ENCODE measurements at regions of chr1 and their contacts with region 1.

Region 1: DNA sequence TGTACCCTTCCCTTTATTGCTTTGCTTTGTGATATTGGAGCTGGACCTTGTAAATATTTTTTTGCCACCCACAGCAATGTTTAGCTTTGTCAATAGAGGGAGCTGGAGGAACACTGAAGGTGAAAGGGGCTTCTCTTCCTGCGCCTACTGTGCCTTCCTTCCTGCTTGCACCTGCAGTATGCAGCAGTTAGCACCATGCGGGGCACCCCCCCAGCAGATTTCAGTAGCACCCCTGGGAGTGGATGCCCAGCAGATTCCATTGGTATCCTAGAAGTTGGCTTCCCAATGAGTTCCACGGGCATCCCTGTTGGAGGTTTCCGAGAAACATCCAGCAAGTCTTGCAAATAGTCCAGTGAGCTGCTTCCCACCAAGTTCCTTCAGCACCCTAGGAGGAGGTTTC is 25.6 kb downstream of the S100A10 start:
- DNase-seq: peak; percentile 52 to 74
- ATAC-seq: peak; percentile 79 to 84
- H3K4me3 ChIP-seq: no peak overlapping the region
- H3K27ac ChIP-seq: peak overlapping the region; percentile 77 to 89
- H3K4me1 ChIP-seq: peaks cover 49% of the 10 kb centered on the region
- CTCF ChIP-seq: peak; percentile 92
- EP300 ChIP-seq: no peak
- POLR2A ChIP-seq: no peak
- RAD21 ChIP-seq: peak; percentile 97 to 99

Region 2: GRCh38 chr1:151915061-151915686 is 52.9 kb before region 1 on chr1:
- CTCF ChIA-PET with region 1: interaction called, 12 read pairs
- POLR2A ChIA-PET with region 1: no interaction called
- DNase-seq: no peak
- ATAC-seq: no peak
- H3K4me3 ChIP-seq: no peak overlapping the region
- H3K27ac ChIP-seq: no peak overlapping the region
- H3K4me1 ChIP-seq: no peaks in the 10 kb centered on the region
- CTCF ChIP-seq: no peak
- EP300 ChIP-seq: no peak
- POLR2A ChIP-seq: no peak
- RAD21 ChIP-seq: no peak

Region 3: GRCh38 chr1:151939779-151940178 is 28.3 kb before region 1 on chr1:
- CTCF ChIA-PET with region 1: interaction called, 70 read pairs
- POLR2A ChIA-PET with region 1: no interaction called
- DNase-seq: no peak
- ATAC-seq: no peak
- H3K4me3 ChIP-seq: no peak overlapping the region
- H3K27ac ChIP-seq: peak overlapping the region in 1 of 2 experiments; percentile 37; a peak in 2 of 6 replicates
- H3K4me1 ChIP-seq: peaks cover 75% of the 10 kb centered on the region
- CTCF ChIP-seq: no peak
- EP300 ChIP-seq: no peak
- POLR2A ChIP-seq: no peak
- RAD21 ChIP-seq: no peak

Region 4: GRCh38 chr1:151953409-151954094 is 14.5 kb before region 1 on chr1:
- CTCF ChIA-PET with region 1: interaction called, 35 read pairs
- POLR2A ChIA-PET with region 1: no interaction called
- DNase-seq: no peak
- ATAC-seq: peak in 1 of 2 experiments; percentile 73; a peak in 3 of 6 replicates
- H3K4me3 ChIP-seq: no peak overlapping the region
- H3K27ac ChIP-seq: peak overlapping the region; percentile 38 to 45; a peak in 4 of 6 replicates
- H3K4me1 ChIP-seq: peaks cover 18% of the 10 kb centered on the region
- CTCF ChIP-seq: no peak
- EP300 ChIP-seq: no peak
- POLR2A ChIP-seq: no peak
- RAD21 ChIP-seq: no peak

Region 5: GRCh38 chr1:152001391-152002249 is 33.6 kb after region 1 on chr1:
- CTCF ChIA-PET with region 1: interaction called, 1,410 read pairs
- POLR2A ChIA-PET with region 1: interaction called, 19 read pairs
- DNase-seq: peak; percentile 66 to 89
- ATAC-seq: peak; percentile 66 to 70
- H3K4me3 ChIP-seq: no peak overlapping the region
- H3K27ac ChIP-seq: peak overlapping the region; percentile 72 to 83
- H3K4me1 ChIP-seq: peaks cover 52% of the 10 kb centered on the region
- CTCF ChIP-seq: peak; percentile 95
- EP300 ChIP-seq: no peak
- POLR2A ChIP-seq: no peak
- RAD21 ChIP-seq: peak; percentile 99

Region 6: GRCh38 chr1:152034646-152035405 is 66.8 kb after region 1 on chr1:
- CTCF ChIA-PET with region 1: interaction called, 25 read pairs
- POLR2A ChIA-PET with region 1: interaction called, 3 read pairs
- DNase-seq: peak; percentile 80 to 86
- ATAC-seq: peak; percentile 44 to 59
- H3K4me3 ChIP-seq: peak overlapping the region; percentile 78
- H3K27ac ChIP-seq: peak overlapping the region; percentile 98 to 100
- H3K4me1 ChIP-seq: peaks cover 31% of the 10 kb centered on the region
- CTCF ChIP-seq: peak; percentile 73
- EP300 ChIP-seq: no peak
- POLR2A ChIP-seq: no peak
- RAD21 ChIP-seq: peak; percentile 44 to 54

Region 7: DNA sequence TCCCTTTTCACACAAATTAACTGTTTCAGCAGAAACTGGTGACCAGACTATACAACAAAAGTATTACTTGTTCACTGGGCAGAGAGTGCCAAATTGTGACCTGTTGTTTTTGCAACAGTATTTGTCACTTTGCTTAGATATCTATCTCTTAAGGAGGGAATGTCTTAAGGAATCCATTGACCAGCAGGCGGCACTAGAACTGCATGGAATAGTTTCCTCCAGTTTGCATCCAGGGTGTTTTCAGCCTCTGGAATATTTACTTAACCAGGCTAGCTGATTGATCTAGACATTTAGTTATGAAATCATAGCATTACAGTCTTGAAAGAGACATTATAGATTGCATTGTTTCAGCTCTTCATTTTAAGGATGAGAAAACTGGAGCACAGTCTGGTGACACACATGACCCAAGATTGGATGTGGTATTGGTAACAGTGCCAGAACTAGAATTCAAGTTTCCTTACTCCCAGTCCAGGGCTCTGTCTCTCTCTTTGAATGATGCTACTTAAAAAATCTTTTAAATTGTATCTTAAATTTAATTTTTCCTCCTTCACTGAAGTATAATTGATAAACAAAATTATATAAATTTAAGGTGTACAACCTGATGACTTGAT is 174.0 kb after region 1 on chr1:
- CTCF ChIA-PET with region 1: no interaction called
- POLR2A ChIA-PET with region 1: no interaction called
- DNase-seq: peak; percentile 38 to 78
- ATAC-seq: peak; percentile 92 to 94
- H3K4me3 ChIP-seq: no peak overlapping the region
- H3K27ac ChIP-seq: no peak overlapping the region
- H3K4me1 ChIP-seq: no peaks in the 10 kb centered on the region
- CTCF ChIP-seq: peak; percentile 98
- EP300 ChIP-seq: no peak
- POLR2A ChIP-seq: no peak
- RAD21 ChIP-seq: peak; percentile 96 to 97